CD4-positive, alpha-beta T cell (primary cell): ENCODE measurements at regions of chr10 and their contacts with region 1.

Region 1: GRCh38 chr10:72088889-72089575 is 681 bp upstream of the SPOCK2 start:
- DNase-seq: peak; percentile 31 to 82 (median 56)
- ATAC-seq: peak; percentile 46
- H3K4me3 ChIP-seq: peak overlapping the region; percentile 98
- H3K4me3 Mint-ChIP-seq: peak overlapping the region; percentile 100
- H3K27ac ChIP-seq: peak overlapping the region; percentile 96
- H3K27ac Mint-ChIP-seq: peak overlapping the region; percentile 98
- H3K4me1 ChIP-seq: peaks cover 55% of the 10 kb centered on the region
- H3K4me1 Mint-ChIP-seq: peaks cover 56% of the 10 kb centered on the region
- H3K27me3 ChIP-seq: no peaks in the 10 kb centered on the region
- H3K27me3 Mint-ChIP-seq: peaks cover 4% of the 10 kb centered on the region
- CTCF ChIP-seq: no peak

Region 2: DNA sequence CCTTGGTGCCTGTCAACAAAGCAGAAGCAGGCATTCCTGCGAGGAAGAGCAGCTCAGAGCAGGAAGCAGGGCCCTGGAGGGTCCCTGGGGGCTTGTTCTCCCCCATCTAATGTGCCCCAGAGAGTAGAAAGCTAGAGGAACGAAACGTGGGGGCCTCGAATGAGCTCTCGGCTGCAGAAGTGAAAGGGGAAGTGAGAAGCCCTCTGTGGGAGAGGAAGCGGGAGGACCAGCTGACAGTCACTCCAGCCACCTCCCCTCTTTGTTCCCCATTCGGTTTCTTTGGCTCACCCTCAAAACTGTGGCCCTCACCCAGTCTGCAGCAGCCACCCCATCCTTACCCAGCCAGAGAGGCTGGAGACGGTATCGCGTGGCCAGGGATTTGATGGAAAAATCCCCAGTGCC is 394.5 kb before region 1 on chr10:
- CTCF ChIA-PET with region 1: no interaction called
- POLR2A ChIA-PET with region 1: no interaction called
- intact Hi-C with region 1: no loop called
- DNase-seq: peak in 9 of 14 experiments; percentile 16 to 69 (median 33)
- ATAC-seq: peak; percentile 56
- H3K4me3 ChIP-seq: peak overlapping the region; percentile 32
- H3K4me3 Mint-ChIP-seq: no peak overlapping the region
- H3K27ac ChIP-seq: no peak overlapping the region
- H3K27ac Mint-ChIP-seq: peak overlapping the region; percentile 56
- H3K4me1 ChIP-seq: peaks cover 57% of the 10 kb centered on the region
- H3K4me1 Mint-ChIP-seq: peaks cover 29% of the 10 kb centered on the region
- H3K27me3 ChIP-seq: no peaks in the 10 kb centered on the region
- H3K27me3 Mint-ChIP-seq: no peaks in the 10 kb centered on the region
- CTCF ChIP-seq: no peak

Region 3: GRCh38 chr10:72026278-72027111 is 62.5 kb before region 1 on chr10:
- CTCF ChIA-PET with region 1: no interaction called
- POLR2A ChIA-PET with region 1: no interaction called
- intact Hi-C with region 1: no loop called
- DNase-seq: no peak
- ATAC-seq: no peak
- H3K4me3 ChIP-seq: no peak overlapping the region
- H3K4me3 Mint-ChIP-seq: no peak overlapping the region
- H3K27ac ChIP-seq: no peak overlapping the region
- H3K27ac Mint-ChIP-seq: no peak overlapping the region
- H3K4me1 ChIP-seq: no peaks in the 10 kb centered on the region
- H3K4me1 Mint-ChIP-seq: no peaks in the 10 kb centered on the region
- H3K27me3 ChIP-seq: peaks cover 0 to 3% of the 10 kb centered on the region in 2 experiments
- H3K27me3 Mint-ChIP-seq: peaks cover 12% of the 10 kb centered on the region
- CTCF ChIP-seq: no peak

Region 4: DNA sequence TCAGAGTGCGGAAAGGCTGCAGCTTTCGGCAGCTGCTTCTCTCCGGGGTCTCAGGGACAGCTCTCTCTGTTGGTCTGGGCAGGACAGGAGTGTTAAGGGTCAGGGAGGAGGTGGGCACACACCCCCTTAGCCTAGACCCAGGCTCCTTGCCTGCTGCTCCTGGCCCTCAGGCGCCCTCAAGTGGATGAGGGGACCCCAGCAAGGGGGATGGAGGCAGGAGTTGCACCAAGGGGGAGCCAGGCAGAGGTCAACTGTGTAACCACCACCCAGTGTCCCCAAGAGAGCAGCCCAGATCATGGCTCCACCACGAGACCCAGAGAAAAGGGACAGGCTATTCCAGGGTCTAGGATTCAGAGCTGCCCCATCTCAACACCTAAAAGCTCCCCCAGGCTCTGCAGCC is 27.5 kb before region 1 on chr10:
- CTCF ChIA-PET with region 1: no interaction called
- POLR2A ChIA-PET with region 1: interaction called, 43 read pairs
- intact Hi-C with region 1: no loop called
- DNase-seq: peak in 1 of 14 experiments; percentile 39
- ATAC-seq: peak; percentile 18
- H3K4me3 ChIP-seq: no peak overlapping the region
- H3K4me3 Mint-ChIP-seq: peak overlapping the region; percentile 79
- H3K27ac ChIP-seq: no peak overlapping the region
- H3K27ac Mint-ChIP-seq: peak overlapping the region; percentile 95
- H3K4me1 ChIP-seq: peaks cover 10% of the 10 kb centered on the region
- H3K4me1 Mint-ChIP-seq: peaks cover 47% of the 10 kb centered on the region
- H3K27me3 ChIP-seq: no peaks in the 10 kb centered on the region
- H3K27me3 Mint-ChIP-seq: peaks cover 25% of the 10 kb centered on the region
- CTCF ChIP-seq: no peak

Region 5: DNA sequence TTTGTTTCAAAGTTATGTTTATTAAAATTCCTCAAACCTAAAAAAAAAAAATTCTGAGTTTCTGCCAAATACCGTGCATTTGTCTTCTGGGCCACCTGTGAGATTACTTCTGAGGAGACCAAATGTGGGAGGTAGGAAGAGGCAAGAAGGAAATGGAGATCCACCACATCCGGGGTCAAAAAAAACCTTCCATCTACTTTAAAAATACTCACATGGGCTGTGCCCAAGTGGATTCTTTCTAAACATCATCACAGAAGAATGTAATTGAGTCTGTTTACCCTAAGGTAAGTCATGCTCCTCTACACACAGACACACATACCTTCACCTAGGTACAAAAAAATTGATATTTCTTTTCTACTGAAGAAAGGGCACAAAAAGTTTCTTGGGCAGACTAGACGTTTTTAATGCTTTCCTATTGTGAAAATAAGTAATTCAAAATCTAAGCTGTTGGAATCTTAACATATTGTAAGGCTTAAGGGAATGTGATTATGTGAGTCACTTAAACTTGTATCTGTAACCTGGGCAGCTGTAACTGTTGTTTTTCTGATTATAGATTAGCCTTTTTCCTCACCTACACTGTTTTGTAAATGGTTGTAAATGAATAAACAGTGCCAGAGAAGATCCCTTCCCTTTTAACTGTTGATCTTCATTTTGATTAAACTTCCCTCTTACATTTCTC is 18.4 kb after region 1 on chr10:
- CTCF ChIA-PET with region 1: interaction called, 5 read pairs
- POLR2A ChIA-PET with region 1: interaction called, 117 read pairs
- intact Hi-C with region 1: loop called (anchors 1 to 2 kb)
- DNase-seq: peak in 4 of 14 experiments; percentile 34 to 82 (median 78)
- ATAC-seq: peak; percentile 77
- H3K4me3 ChIP-seq: peak overlapping the region; percentile 12
- H3K4me3 Mint-ChIP-seq: peak overlapping the region; percentile 87
- H3K27ac ChIP-seq: peak overlapping the region; percentile 69 to 74
- H3K27ac Mint-ChIP-seq: peak overlapping the region; percentile 94
- H3K4me1 ChIP-seq: peaks cover 70% of the 10 kb centered on the region
- H3K4me1 Mint-ChIP-seq: peaks cover 92% of the 10 kb centered on the region
- H3K27me3 ChIP-seq: no peaks in the 10 kb centered on the region
- H3K27me3 Mint-ChIP-seq: no peaks in the 10 kb centered on the region
- CTCF ChIP-seq: no peak

Region 6: GRCh38 chr10:72133517-72133916 is 44.5 kb after region 1 on chr10:
- CTCF ChIA-PET with region 1: interaction called, 3 read pairs
- POLR2A ChIA-PET with region 1: interaction called, 44 read pairs
- intact Hi-C with region 1: loop called (anchors 5 kb)
- DNase-seq: peak in 2 of 14 experiments; percentile 30 to 33
- ATAC-seq: no peak
- H3K4me3 ChIP-seq: no peak overlapping the region
- H3K4me3 Mint-ChIP-seq: no peak overlapping the region
- H3K27ac ChIP-seq: no peak overlapping the region
- H3K27ac Mint-ChIP-seq: peak overlapping the region; percentile 45
- H3K4me1 ChIP-seq: peaks cover 21% of the 10 kb centered on the region
- H3K4me1 Mint-ChIP-seq: peaks cover 44% of the 10 kb centered on the region
- H3K27me3 ChIP-seq: no peaks in the 10 kb centered on the region
- H3K27me3 Mint-ChIP-seq: no peaks in the 10 kb centered on the region
- CTCF ChIP-seq: no peak

Region 7: DNA sequence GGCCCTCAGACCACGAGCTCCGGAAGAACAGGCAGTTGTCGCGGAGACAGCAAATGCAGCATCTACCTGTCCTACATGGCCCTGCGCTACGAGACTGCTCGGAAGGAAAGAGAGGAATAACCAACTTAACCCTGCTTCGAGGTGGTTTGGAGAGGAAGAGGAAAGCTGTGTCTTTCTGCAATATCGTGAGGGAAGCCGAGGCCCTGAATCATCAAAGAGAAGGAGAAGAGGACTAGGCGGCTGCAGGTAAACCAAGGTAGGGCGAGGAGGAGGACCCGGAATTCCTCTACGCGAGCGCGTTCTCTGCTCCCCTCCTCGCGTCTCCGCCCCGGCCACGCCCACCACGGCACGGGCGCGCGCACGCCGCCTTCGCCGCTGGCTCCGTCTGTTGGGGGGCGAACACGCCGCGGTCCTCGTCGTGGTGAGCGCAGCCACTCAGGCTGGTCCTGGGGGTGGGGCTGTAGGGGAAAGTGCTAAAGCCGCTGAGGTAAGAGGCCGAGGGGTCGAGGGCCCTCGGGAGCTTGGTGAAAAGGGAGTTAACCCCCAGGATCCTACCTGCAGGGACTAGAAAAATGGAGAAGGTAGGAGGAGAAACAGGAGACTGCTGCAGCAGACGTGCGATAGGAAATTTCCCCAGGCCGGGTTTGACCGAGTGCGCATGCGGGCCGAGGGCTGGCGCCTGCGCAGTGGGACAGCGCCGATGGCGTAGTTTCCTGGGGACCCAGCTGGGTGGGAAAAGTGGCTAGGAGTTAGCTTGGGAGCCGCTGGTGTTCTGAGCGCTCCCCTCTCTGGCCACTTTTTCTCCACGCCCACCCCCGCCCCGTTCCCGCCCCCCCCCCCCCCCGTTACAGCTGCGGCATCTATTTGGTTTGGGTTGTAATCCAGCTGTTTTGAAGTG is 126.9 kb after region 1 on chr10 and contains the starts of genes ANAPC16 and ASCC1:
- CTCF ChIA-PET with region 1: no interaction called
- POLR2A ChIA-PET with region 1: interaction called, 26 read pairs
- intact Hi-C with region 1: loop called (anchors 5 kb)
- DNase-seq: peak; percentile 86 to 97 (median 94)
- ATAC-seq: peak; percentile 79
- H3K4me3 ChIP-seq: peak within 1 kb of the TSS; percentile 83
- H3K4me3 Mint-ChIP-seq: peak within 1 kb of the TSS; percentile 97
- H3K27ac ChIP-seq: peak within 1 kb of the TSS; percentile 89 to 98
- H3K27ac Mint-ChIP-seq: peak within 1 kb of the TSS; percentile 94
- H3K4me1 ChIP-seq: peaks cover 62% of the 10 kb centered on the region
- H3K4me1 Mint-ChIP-seq: peaks cover 50% of the 10 kb centered on the region
- H3K27me3 ChIP-seq: no peaks in the 10 kb centered on the region
- H3K27me3 Mint-ChIP-seq: no peaks in the 10 kb centered on the region
- CTCF ChIP-seq: no peak
- total RNA-seq, gene ANAPC16: 61.9 to 64.3 TPM
- total RNA-seq, gene ASCC1: 16.5 to 19.0 TPM

Region 8: GRCh38 chr10:72297968-72298773 is 209.1 kb after region 1 on chr10:
- CTCF ChIA-PET with region 1: no interaction called
- POLR2A ChIA-PET with region 1: interaction called, 14 read pairs
- intact Hi-C with region 1: no loop called
- DNase-seq: peak; percentile 68 to 97 (median 83)
- ATAC-seq: peak; percentile 57
- H3K4me3 ChIP-seq: peak overlapping the region; percentile 75
- H3K4me3 Mint-ChIP-seq: peak overlapping the region; percentile 82
- H3K27ac ChIP-seq: peak overlapping the region; percentile 89 to 98
- H3K27ac Mint-ChIP-seq: peak overlapping the region; percentile 96
- H3K4me1 ChIP-seq: peaks cover 56% of the 10 kb centered on the region
- H3K4me1 Mint-ChIP-seq: peaks cover 63% of the 10 kb centered on the region
- H3K27me3 ChIP-seq: no peaks in the 10 kb centered on the region
- H3K27me3 Mint-ChIP-seq: no peaks in the 10 kb centered on the region
- CTCF ChIP-seq: no peak

Region 9: DNA sequence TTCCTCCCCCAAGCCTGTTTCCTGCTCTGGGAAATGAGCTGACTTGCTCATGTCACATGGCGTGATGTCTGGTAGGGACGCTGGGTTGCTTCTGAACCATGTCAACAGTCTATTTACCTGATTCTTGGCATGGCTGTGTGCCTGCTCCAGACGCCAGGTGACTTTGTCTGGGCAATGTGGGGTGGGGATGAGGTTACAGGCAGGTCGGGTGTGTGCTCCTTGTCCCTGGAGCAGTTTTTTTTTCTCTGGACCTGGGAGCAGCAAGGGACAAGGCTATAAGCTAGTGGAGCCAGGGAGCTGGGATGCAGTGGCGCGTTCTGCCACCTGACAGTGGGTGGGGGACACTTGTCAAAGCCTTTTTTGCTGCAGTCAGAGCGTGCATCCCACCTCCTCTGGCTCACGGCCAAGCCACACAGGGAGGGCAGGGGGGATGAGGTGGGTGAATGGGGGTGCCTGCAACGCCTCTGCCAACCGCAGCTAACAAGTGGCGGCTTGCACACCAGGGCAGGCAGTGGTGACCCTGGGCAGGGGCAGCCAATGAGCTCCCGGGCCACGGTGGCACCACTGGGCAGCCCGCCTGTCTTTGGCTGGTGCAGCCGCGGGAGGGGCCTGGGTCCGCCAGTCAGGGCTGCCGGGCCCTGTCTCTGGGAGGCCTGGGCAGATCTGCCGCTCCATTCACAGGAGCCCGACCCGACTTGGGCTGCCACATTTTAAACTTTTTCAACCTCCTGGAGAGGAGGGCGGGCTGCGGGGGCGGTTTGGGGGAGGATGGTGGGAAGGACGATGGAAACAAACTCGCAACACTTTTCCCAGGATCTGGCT is 242.8 kb after region 1 on chr10:
- CTCF ChIA-PET with region 1: interaction called, 4 read pairs
- POLR2A ChIA-PET with region 1: interaction called, 13 read pairs
- intact Hi-C with region 1: loop called in 1 of 2 experiments (anchors 2 kb)
- DNase-seq: peak; percentile 77 to 95 (median 85)
- ATAC-seq: peak; percentile 65
- H3K4me3 ChIP-seq: peak overlapping the region; percentile 24
- H3K4me3 Mint-ChIP-seq: peak overlapping the region; percentile 76
- H3K27ac ChIP-seq: peak overlapping the region; percentile 30 to 71
- H3K27ac Mint-ChIP-seq: peak overlapping the region; percentile 94
- H3K4me1 ChIP-seq: peaks cover 100% of the 10 kb centered on the region
- H3K4me1 Mint-ChIP-seq: peaks cover 91% of the 10 kb centered on the region
- H3K27me3 ChIP-seq: no peaks in the 10 kb centered on the region
- H3K27me3 Mint-ChIP-seq: no peaks in the 10 kb centered on the region
- CTCF ChIP-seq: peak; percentile 12

Region 10: DNA sequence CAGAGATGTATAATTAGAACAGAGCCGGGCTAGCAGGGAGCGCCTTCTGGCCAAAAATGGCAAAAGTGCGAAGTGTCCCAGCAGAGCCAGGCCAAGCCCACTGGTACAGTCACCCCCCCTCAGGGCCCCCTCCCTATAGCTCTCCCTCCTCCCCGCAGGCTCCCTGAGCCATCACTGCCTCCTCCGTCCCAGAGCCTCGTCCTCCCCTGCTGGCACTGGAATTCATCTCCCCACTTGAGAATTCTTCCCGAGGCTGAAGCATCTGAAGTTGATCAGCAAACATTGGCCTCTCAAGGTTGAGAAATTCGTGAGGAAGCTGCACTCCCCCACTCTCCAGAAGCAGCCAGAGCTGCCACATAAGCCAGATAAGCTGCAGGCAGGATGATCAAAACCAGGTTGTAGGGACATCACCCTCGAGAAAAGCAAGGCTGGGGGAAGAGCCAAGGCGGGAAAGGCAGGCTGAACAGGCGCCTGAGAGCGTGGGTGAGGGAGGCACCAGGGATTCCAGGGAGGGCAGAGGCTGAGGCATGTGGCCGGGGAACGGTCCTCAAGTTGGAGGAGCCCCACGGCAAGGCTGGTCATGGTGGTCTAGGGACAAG is 1761.9 kb after region 1 on chr10:
- CTCF ChIA-PET with region 1: no interaction called
- POLR2A ChIA-PET with region 1: no interaction called
- intact Hi-C with region 1: no loop called
- DNase-seq: no peak
- ATAC-seq: no peak
- H3K4me3 ChIP-seq: no peak overlapping the region
- H3K4me3 Mint-ChIP-seq: no peak overlapping the region
- H3K27ac ChIP-seq: no peak overlapping the region
- H3K27ac Mint-ChIP-seq: peak overlapping the region; percentile 89
- H3K4me1 ChIP-seq: peaks cover 16% of the 10 kb centered on the region
- H3K4me1 Mint-ChIP-seq: peaks cover 21% of the 10 kb centered on the region
- H3K27me3 ChIP-seq: no peaks in the 10 kb centered on the region
- H3K27me3 Mint-ChIP-seq: no peaks in the 10 kb centered on the region
- CTCF ChIP-seq: no peak